ENCODE measurements at regions of chr3 and their contacts with region 1.

Region 1: GRCh38 chr3:18717598-18717997 is 292.5 kb upstream of the SATB1 start:
- DNase-seq: no peak
- H3K4me3 Mint-ChIP-seq: peak overlapping the region; percentile 43
- H3K27ac Mint-ChIP-seq: peak overlapping the region; percentile 99
- H3K4me1 Mint-ChIP-seq: peaks cover 72% of the 10 kb centered on the region
- H3K27me3 Mint-ChIP-seq: no peaks in the 10 kb centered on the region

Region 2: GRCh38 chr3:18431266-18431665 is 286.3 kb before region 1 on chr3:
- CTCF ChIA-PET with region 1: no interaction called
- POLR2A ChIA-PET with region 1: interaction called, 15 read pairs
- DNase-seq: no peak
- H3K4me3 Mint-ChIP-seq: peak overlapping the region; percentile 73
- H3K27ac Mint-ChIP-seq: peak overlapping the region; percentile 85
- H3K4me1 Mint-ChIP-seq: peaks cover 77% of the 10 kb centered on the region
- H3K27me3 Mint-ChIP-seq: no peaks in the 10 kb centered on the region

Region 3: DNA sequence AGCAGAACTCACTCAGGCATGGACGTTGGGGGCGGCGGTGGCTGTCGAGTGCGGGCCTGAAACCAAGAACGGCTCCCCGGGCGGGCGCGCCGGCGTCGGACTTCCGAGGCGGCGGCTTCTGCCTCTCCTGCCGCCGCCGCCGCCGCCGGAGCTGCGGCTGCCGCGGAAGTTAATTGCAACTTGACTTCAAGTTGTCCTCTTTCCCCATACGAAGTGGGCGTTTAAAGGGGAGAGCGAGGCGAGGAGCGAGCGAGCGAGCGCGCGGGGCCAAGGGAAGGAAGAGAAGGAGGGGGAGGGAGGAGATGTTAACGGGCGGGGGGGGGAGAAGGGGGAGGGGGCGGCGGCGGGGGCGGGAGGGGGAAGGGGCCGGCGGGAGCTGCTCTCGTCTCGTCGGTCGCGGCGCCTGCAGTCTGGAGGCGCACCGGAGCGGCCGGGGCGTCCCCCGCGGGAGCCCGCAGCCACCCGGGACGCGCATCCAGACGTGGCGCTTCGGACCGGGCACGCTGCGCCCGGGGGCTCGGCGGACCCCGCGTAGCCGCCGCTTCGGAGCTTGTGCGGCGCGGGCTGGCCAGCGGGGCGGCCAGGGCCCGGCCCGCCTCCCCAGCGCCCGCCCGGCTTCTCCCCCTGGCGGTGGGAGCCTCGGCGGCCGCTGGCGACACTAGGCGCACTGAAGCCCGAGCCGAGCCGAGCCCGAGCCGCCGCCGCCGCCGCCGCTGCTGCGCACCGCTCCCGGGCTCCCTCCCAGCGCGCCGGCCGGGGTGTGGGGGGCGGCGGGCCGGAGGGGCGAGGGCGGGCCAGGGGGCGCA is 272.8 kb before region 1 on chr3:
- CTCF ChIA-PET with region 1: interaction called, 3 read pairs
- POLR2A ChIA-PET with region 1: interaction called, 128 read pairs
- DNase-seq: peak; percentile 81
- H3K4me3 Mint-ChIP-seq: peak overlapping the region; percentile 94
- H3K27ac Mint-ChIP-seq: peak overlapping the region; percentile 91
- H3K4me1 Mint-ChIP-seq: peaks cover 39% of the 10 kb centered on the region
- H3K27me3 Mint-ChIP-seq: no peaks in the 10 kb centered on the region

Region 4: DNA sequence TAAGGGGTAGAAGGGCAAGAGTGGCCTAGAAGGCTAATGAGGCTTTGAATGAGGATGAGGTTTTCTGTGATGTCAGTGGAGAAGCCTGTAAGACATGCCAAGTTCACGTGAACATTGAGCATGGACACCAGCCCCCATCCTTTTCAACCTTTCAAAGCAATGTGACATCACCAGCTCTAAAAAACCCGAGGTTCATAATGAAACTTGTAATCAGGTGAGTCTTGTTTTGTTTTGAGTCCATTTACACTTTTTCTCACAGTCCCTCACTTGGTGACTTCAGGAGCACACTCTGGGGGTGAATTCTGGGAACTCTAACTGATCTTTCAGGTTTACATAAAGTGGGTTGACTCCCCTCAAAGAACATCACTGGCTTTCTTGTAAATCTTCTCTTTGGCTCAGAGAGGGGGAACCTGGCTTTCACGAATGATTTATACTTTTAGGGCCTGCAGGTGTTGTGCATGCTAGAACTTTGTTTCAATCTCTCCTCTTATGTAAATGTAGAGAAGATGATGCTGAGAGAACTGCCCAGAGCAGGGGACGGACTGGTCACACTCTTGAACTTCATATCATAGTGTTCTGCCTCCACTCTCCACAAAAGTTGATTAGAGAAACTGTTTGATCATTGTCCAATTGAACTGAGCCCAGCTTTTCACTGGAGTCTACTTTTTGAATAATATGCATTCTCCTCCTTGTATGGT is 67.8 kb before region 1 on chr3:
- CTCF ChIA-PET with region 1: interaction called, 3 read pairs
- POLR2A ChIA-PET with region 1: interaction called, 12 read pairs
- DNase-seq: peak; percentile 61
- H3K4me3 Mint-ChIP-seq: peak overlapping the region; percentile 25
- H3K27ac Mint-ChIP-seq: peak overlapping the region; percentile 90
- H3K4me1 Mint-ChIP-seq: peaks cover 86% of the 10 kb centered on the region
- H3K27me3 Mint-ChIP-seq: no peaks in the 10 kb centered on the region

Region 5: GRCh38 chr3:18740631-18741583 is 23.3 kb after region 1 on chr3:
- CTCF ChIA-PET with region 1: interaction called, 16 read pairs
- POLR2A ChIA-PET with region 1: interaction called, 183 read pairs
- DNase-seq: peak; percentile 72
- H3K4me3 Mint-ChIP-seq: peak overlapping the region; percentile 71
- H3K27ac Mint-ChIP-seq: peak overlapping the region; percentile 92
- H3K4me1 Mint-ChIP-seq: peaks cover 89% of the 10 kb centered on the region
- H3K27me3 Mint-ChIP-seq: no peaks in the 10 kb centered on the region